Naive thymus-derived CD4-positive, alpha-beta T cell (primary cell): ENCODE measurements at regions of chr2 and their contacts with region 1.

Region 1: GRCh38 chr2:110677530-110678456 is at the start of gene BUB1:
- DNase-seq: peak; percentile 88 to 96 (median 94)
- ATAC-seq: peak; percentile 97
- H3K4me3 ChIP-seq: peak within 1 kb of the TSS; percentile 87
- H3K4me3 Mint-ChIP-seq: peak within 1 kb of the TSS; percentile 91 to 100 (median 99)
- H3K27ac ChIP-seq: peak within 1 kb of the TSS; percentile 73
- H3K27ac Mint-ChIP-seq: peak within 1 kb of the TSS; percentile 92 to 100 (median 98)
- H3K4me1 ChIP-seq: peaks cover 0 to 17% of the 10 kb centered on the region in 2 donors
- H3K4me1 Mint-ChIP-seq: peaks cover 5 to 45% (median 20%) of the 10 kb centered on the region in 7 donors
- H3K27me3 ChIP-seq: no peaks in the 10 kb centered on the region
- H3K27me3 Mint-ChIP-seq: peaks cover 0 to 16% (median 0%) of the 10 kb centered on the region in 5 donors
- total RNA-seq, gene BUB1: 2.3 to 73.7 (median 2.6) TPM

Region 2: GRCh38 chr2:110204780-110205385 is 472.9 kb before region 1 on chr2 and contains the start of gene NPHP1:
- CTCF ChIA-PET with region 1: no interaction called
- POLR2A ChIA-PET with region 1: no interaction called
- intact Hi-C with region 1: loop called in 1 of 2 experiments (anchors 5 kb)
- DNase-seq: peak; percentile 76 to 91 (median 85)
- ATAC-seq: peak; percentile 95
- H3K4me3 ChIP-seq: peak within 1 kb of the TSS; percentile 76
- H3K4me3 Mint-ChIP-seq: peak within 1 kb of the TSS; percentile 81 to 93 (median 88)
- H3K27ac ChIP-seq: peak within 1 kb of the TSS; percentile 72
- H3K27ac Mint-ChIP-seq: peak within 1 kb of the TSS; percentile 66 to 94 (median 90)
- H3K4me1 ChIP-seq: peaks cover 6 to 7% of the 10 kb centered on the region in 2 donors
- H3K4me1 Mint-ChIP-seq: peaks cover 13 to 37% (median 25%) of the 10 kb centered on the region in 7 donors
- H3K27me3 ChIP-seq: no peaks in the 10 kb centered on the region
- H3K27me3 Mint-ChIP-seq: peaks cover 0 to 5% (median 0%) of the 10 kb centered on the region in 5 donors
- total RNA-seq, gene NPHP1: 0.11 to 0.64 (median 0.46) TPM in 4 of 5 experiments, not detected in the other

Region 3: GRCh38 chr2:110748489-110748867 is 70.7 kb after region 1 on chr2:
- CTCF ChIA-PET with region 1: no interaction called
- POLR2A ChIA-PET with region 1: no interaction called
- intact Hi-C with region 1: loop called in 1 of 2 experiments (anchors 2 kb)
- DNase-seq: peak in 6 of 9 donors; percentile 7 to 77 (median 16)
- ATAC-seq: peak; percentile 86
- H3K4me3 ChIP-seq: peak overlapping the region; percentile 0
- H3K4me3 Mint-ChIP-seq: peak overlapping the region in 9 of 10 donors; percentile 7 to 72 (median 43)
- H3K27ac ChIP-seq: no peak overlapping the region
- H3K27ac Mint-ChIP-seq: peak overlapping the region in 1 of 9 donors; percentile 79
- H3K4me1 ChIP-seq: peaks cover 11 to 13% of the 10 kb centered on the region in 2 donors
- H3K4me1 Mint-ChIP-seq: peaks cover 12 to 45% (median 16%) of the 10 kb centered on the region in 7 donors
- H3K27me3 ChIP-seq: no peaks in the 10 kb centered on the region
- H3K27me3 Mint-ChIP-seq: peaks cover 34 to 53% (median 37%) of the 10 kb centered on the region in 5 donors

Region 4: GRCh38 chr2:110755491-110756078 is 77.8 kb after region 1 on chr2:
- CTCF ChIA-PET with region 1: no interaction called
- POLR2A ChIA-PET with region 1: no interaction called
- intact Hi-C with region 1: loop called in 1 of 2 experiments (anchors 2 kb)
- DNase-seq: peak in 2 of 9 donors; percentile 7 to 18
- ATAC-seq: no peak
- H3K4me3 ChIP-seq: no peak overlapping the region
- H3K4me3 Mint-ChIP-seq: no peak overlapping the region
- H3K27ac ChIP-seq: no peak overlapping the region
- H3K27ac Mint-ChIP-seq: no peak overlapping the region
- H3K4me1 ChIP-seq: no peaks in the 10 kb centered on the region
- H3K4me1 Mint-ChIP-seq: peaks cover 0 to 9% (median 0%) of the 10 kb centered on the region in 7 donors
- H3K27me3 ChIP-seq: no peaks in the 10 kb centered on the region
- H3K27me3 Mint-ChIP-seq: peaks cover 9 to 64% (median 18%) of the 10 kb centered on the region in 5 donors

Region 5: DNA sequence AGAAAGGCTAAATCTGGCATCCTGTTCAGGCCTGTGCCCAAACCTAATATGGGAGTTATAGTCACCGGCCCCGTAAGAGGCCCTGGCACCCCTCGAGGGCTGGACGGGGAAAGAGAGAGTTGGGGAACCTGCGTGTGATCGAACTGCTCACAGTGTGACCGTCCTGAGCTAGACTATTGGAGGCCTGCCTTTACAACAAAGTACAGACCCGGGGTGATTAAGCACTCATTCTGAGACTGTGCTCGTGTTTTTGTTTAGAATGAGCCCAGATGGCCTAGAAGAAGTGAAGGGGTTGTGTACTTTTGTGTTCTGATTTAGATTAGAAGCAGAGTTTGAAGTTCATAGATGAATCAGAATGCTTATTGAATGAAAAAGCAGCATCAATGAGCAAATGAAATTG is 169.9 kb after region 1 on chr2:
- CTCF ChIA-PET with region 1: no interaction called
- POLR2A ChIA-PET with region 1: no interaction called
- intact Hi-C with region 1: loop called in 1 of 2 experiments (anchors 2 kb)
- DNase-seq: no peak
- ATAC-seq: no peak
- H3K4me3 ChIP-seq: no peak overlapping the region
- H3K4me3 Mint-ChIP-seq: peak overlapping the region in 2 of 10 donors; percentile 13 to 74
- H3K27ac ChIP-seq: peak overlapping the region; percentile 52
- H3K27ac Mint-ChIP-seq: peak overlapping the region; percentile 79 to 96 (median 89)
- H3K4me1 ChIP-seq: peaks cover 29 to 47% of the 10 kb centered on the region in 2 donors
- H3K4me1 Mint-ChIP-seq: peaks cover 38 to 78% (median 55%) of the 10 kb centered on the region in 7 donors
- H3K27me3 ChIP-seq: no peaks in the 10 kb centered on the region
- H3K27me3 Mint-ChIP-seq: peaks cover 0 to 27% (median 0%) of the 10 kb centered on the region in 5 donors

Region 6: DNA sequence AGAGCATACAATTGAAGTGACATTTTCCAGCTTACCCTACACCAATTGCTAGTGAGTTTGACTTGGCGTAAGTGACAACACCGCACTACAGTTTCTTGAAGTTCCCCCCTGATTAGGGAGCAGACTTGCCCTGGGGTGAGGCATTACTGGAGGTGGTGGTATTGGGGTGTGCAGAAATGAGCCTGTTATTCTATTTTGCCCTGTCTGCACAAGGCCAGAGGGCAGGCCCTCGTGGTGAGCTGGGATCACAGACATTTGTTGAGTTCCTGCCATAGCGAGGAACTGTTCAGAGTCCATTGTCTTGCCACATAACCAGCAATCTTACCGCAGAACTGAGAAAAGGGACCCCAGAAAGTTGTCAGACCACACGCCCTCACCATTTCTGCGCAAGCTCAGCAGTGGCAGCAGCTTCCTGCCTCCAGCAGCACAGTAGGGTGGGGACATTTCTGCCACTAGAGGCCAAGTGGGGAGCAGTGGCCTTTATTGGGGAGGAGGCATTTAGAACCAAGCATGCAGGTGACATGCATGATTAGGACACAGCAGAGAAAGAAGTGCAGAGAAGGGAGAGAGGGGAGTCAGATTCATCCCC is 339.3 kb after region 1 on chr2:
- CTCF ChIA-PET with region 1: no interaction called
- POLR2A ChIA-PET with region 1: no interaction called
- intact Hi-C with region 1: no loop called
- DNase-seq: no peak
- ATAC-seq: no peak
- H3K4me3 ChIP-seq: no peak overlapping the region
- H3K4me3 Mint-ChIP-seq: no peak overlapping the region
- H3K27ac ChIP-seq: no peak overlapping the region
- H3K27ac Mint-ChIP-seq: no peak overlapping the region
- H3K4me1 ChIP-seq: no peaks in the 10 kb centered on the region
- H3K4me1 Mint-ChIP-seq: peaks cover 0 to 11% (median 0%) of the 10 kb centered on the region in 7 donors
- H3K27me3 ChIP-seq: no peaks in the 10 kb centered on the region
- H3K27me3 Mint-ChIP-seq: peaks cover 0 to 15% (median 0%) of the 10 kb centered on the region in 5 donors

Region 7: GRCh38 chr2:111883661-111884591 is 1206.1 kb after region 1 on chr2 and contains the start of gene ANAPC1:
- CTCF ChIA-PET with region 1: no interaction called
- POLR2A ChIA-PET with region 1: no interaction called
- intact Hi-C with region 1: loop called in 1 of 2 experiments (anchors 10 kb)
- DNase-seq: peak; percentile 75 to 87 (median 84)
- ATAC-seq: peak; percentile 98
- H3K4me3 ChIP-seq: peak within 1 kb of the TSS; percentile 69
- H3K4me3 Mint-ChIP-seq: peak within 1 kb of the TSS; percentile 92 to 99 (median 96)
- H3K27ac ChIP-seq: peak within 1 kb of the TSS; percentile 85
- H3K27ac Mint-ChIP-seq: peak within 1 kb of the TSS; percentile 92 to 98 (median 96)
- H3K4me1 ChIP-seq: peaks cover 0 to 10% of the 10 kb centered on the region in 2 donors
- H3K4me1 Mint-ChIP-seq: peaks cover 2 to 26% (median 13%) of the 10 kb centered on the region in 7 donors
- H3K27me3 ChIP-seq: no peaks in the 10 kb centered on the region
- H3K27me3 Mint-ChIP-seq: no peaks in the 10 kb centered on the region
- total RNA-seq, gene ANAPC1: 51.8 to 77.2 (median 62.7) TPM

Region 8: DNA sequence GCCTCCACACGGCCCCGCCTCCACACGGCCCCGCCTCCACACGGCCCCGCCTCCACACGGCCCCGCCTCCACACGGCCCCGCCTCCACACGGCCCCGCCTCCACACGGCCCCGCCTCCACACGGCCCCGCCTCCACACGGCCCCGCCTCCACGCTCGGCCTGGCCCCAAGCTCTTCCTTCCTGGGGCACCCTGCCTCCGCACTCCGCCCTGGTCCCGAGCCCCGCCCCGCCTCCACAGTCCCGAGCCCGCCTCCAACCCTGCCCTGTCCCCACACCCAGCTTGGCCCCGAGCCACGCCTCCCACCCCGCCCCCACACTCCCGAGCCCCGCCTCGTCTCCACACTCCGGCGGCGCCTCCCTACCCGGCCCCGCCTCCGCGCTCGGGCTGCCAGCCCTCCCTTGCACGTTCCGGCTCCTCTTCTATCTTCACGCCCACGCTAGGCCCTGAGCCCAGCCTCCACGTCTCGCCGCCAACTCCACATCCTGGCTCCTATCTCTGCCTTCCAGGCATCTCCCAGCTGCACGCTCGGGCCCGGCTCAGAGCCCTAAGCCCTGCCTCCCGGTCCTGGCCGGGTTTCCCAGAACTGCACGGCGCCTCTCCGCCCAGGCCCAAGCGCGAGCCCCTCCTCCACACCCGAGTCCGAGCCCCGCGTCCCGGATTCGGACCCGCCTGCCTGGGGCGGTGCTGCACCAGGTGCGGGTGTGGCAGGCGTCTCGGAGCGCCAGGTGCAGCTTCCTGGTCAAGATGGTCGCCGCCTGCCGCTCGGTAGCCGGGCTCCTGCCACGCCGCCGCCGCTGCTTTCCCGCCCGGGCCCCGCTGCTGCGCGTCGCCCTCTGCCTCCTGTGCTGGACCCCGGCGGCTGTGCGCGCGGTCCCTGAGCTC is 1377.3 kb after region 1 on chr2 and contains the start of gene TMEM87B:
- CTCF ChIA-PET with region 1: no interaction called
- POLR2A ChIA-PET with region 1: no interaction called
- intact Hi-C with region 1: loop called in 1 of 2 experiments (anchors 2 kb)
- DNase-seq: peak; percentile 90 to 98 (median 96)
- ATAC-seq: peak; percentile 80
- H3K4me3 ChIP-seq: peak within 1 kb of the TSS; percentile 85
- H3K4me3 Mint-ChIP-seq: peak within 1 kb of the TSS; percentile 80 to 100 (median 95)
- H3K27ac ChIP-seq: peak within 1 kb of the TSS; percentile 82
- H3K27ac Mint-ChIP-seq: peak within 1 kb of the TSS; percentile 92 to 100 (median 98)
- H3K4me1 ChIP-seq: peaks cover 16 to 19% of the 10 kb centered on the region in 2 donors
- H3K4me1 Mint-ChIP-seq: peaks cover 33 to 48% (median 42%) of the 10 kb centered on the region in 7 donors
- H3K27me3 ChIP-seq: no peaks in the 10 kb centered on the region
- H3K27me3 Mint-ChIP-seq: peaks cover 0 to 2% (median 0%) of the 10 kb centered on the region in 5 donors
- total RNA-seq, gene TMEM87B: 14.0 to 26.9 (median 17.4) TPM